AG04449 (cell line): ENCODE measurements at regions of chr5 and their contacts with region 1.

Region 1: GRCh38 chr5:150544611-150545219 is 36.8 kb downstream of the NDST1 start:
- DNase-seq: no peak
- H3K4me3 ChIP-seq: no peak overlapping the region
- CTCF ChIP-seq: peak; percentile 81

Region 2: GRCh38 chr5:150449517-150450339 is 95.0 kb before region 1 on chr5 and contains the start of gene RPS14:
- CTCF ChIA-PET with region 1: interaction called, 15 read pairs
- POLR2A ChIA-PET with region 1: interaction called, 3 read pairs
- DNase-seq: peak; percentile 52
- H3K4me3 ChIP-seq: peak within 1 kb of the TSS; percentile 68
- CTCF ChIP-seq: peak; percentile 93

Region 3: DNA sequence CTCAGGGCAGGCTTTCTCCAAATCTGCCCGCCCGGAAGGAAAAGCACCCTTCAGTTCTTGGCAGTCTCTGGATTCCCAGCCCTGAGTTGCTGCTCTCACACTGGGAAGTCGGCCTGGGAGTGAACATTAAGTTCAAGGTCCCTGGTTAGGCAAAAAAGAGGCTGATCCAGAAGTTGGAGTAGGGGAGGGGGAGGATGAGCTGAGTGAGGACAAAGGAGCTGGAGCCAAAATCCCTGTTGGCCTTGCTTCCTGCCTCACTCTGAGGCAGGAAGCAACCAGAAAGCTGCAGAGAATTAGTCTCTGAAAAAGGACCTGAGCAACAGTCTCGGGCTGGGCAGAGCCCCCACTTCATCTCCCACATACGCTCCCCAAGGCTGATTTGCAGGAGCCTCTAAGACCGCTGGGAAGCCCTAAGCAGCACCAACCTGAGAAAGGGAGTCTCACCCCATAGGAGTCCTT is 80.1 kb before region 1 on chr5:
- CTCF ChIA-PET with region 1: interaction called, 39 read pairs
- POLR2A ChIA-PET with region 1: no interaction called
- DNase-seq: no peak
- H3K4me3 ChIP-seq: no peak overlapping the region
- CTCF ChIP-seq: no peak

Region 4: DNA sequence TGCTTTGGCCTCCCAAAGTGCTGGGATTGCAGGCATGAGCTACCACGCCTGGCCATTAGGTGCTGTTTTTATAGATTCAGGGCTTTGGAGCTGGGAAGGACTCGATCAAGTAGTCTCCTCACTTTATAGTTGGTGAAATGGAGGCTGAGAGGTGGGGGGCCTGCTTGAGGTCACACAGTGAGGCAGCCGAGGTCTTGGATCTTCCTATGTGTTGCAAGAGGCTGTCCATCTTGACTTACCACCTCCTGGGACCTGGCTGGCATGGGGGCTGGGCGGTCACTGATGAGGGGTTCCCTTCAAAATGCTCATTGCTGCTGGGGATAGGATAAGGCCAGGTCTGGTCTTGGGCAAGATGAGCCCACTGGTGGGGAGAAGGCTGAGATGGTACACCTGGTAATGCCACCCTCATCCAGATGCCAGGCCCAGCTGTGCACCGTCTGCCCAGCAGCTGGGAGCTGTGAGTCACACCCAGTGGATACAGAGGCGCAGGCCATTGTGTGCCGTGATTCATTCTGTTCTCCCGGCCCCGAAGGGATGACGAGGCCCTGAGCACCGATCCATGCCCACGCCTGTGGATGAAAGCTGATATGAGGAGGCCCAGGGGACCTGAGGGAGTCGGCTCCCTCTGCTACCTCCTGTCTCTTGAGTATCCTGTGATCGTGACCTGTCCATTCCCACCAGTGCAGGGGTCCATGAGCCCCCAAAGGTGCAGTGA is 47.3 kb before region 1 on chr5:
- CTCF ChIA-PET with region 1: interaction called, 11 read pairs
- POLR2A ChIA-PET with region 1: interaction called, 4 read pairs
- DNase-seq: no peak
- H3K4me3 ChIP-seq: peak overlapping the region; percentile 35
- CTCF ChIP-seq: no peak

Region 5: GRCh38 chr5:150523472-150524350 is 21.0 kb before region 1 on chr5:
- CTCF ChIA-PET with region 1: interaction called, 12 read pairs
- POLR2A ChIA-PET with region 1: no interaction called
- DNase-seq: no peak
- H3K4me3 ChIP-seq: no peak overlapping the region
- CTCF ChIP-seq: peak; percentile 69

Region 6: DNA sequence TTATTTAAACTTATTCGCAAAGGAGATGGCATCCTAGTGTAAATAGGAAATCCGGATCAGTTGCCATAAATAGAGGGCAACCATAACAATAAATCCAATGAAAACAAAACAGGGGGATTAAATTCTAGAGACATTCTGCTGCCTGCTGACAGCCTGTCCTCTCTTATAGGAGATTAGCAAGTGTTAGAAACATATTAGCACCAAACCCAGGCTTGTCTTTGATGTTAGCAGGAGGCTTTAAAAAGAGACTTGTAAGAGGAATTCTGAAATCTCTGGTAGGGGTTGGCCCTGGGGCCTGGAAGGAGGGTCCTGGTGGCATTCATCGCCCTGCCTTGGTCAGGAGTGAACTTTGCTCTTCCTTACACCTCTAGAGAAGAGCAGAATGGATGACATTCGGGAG is 15.2 kb before region 1 on chr5:
- CTCF ChIA-PET with region 1: interaction called, 26 read pairs
- POLR2A ChIA-PET with region 1: no interaction called
- DNase-seq: no peak
- H3K4me3 ChIP-seq: no peak overlapping the region
- CTCF ChIP-seq: no peak